ENCODE measurements at regions of chr6 and their contacts with region 1.

Region 1: GRCh38 chr6:112372226-112372806 is 25.2 kb downstream of the RFPL4B start:
- DNase-seq: no peak
- H3K4me3 ChIP-seq: no peak overlapping the region
- H3K27ac ChIP-seq: no peak overlapping the region
- H3K27me3 ChIP-seq: peaks cover 0 to 1% (median 0%) of the 10 kb centered on the region in 45 donors
- CTCF ChIP-seq: peak in 55 of 56 donors; percentile 24 to 72 (median 48)

Region 2: GRCh38 chr6:112337209-112337638 is 35.1 kb before region 1 on chr6:
- intact Hi-C with region 1: loop called in 1 of 2 experiments (anchors 5 kb)
- DNase-seq: peak; percentile 23 to 84 (median 71)
- H3K4me3 ChIP-seq: no peak overlapping the region
- H3K27ac ChIP-seq: peak overlapping the region in 1 of 59 donors; percentile 4
- H3K27me3 ChIP-seq: no peaks in the 10 kb centered on the region
- CTCF ChIP-seq: peak; percentile 28 to 91 (median 74)

Measured in dorsolateral prefrontal cortex (tissue), 120 donors.